ENCODE measurements at regions of chr7 and their contacts with region 1.

Region 1: GRCh38 chr7:149310113-149310836 is 48.3 kb downstream of the ZNF783 start:
- DNase-seq: no peak
- ATAC-seq: peak; percentile 80
- H3K4me3 Mint-ChIP-seq: no peak overlapping the region
- H3K27ac Mint-ChIP-seq: no peak overlapping the region
- H3K4me1 Mint-ChIP-seq: no peaks in the 10 kb centered on the region
- H3K27me3 Mint-ChIP-seq: peaks cover 3% of the 10 kb centered on the region
- CTCF ChIP-seq: peak; percentile 21; the same call in 1 of the 2 replicates

Region 2: GRCh38 chr7:149180722-149181449 is 129.4 kb before region 1 on chr7:
- CTCF ChIA-PET with region 1: no interaction called
- POLR2A ChIA-PET with region 1: no interaction called
- DNase-seq: no peak
- ATAC-seq: no peak
- H3K4me3 Mint-ChIP-seq: no peak overlapping the region
- H3K27ac Mint-ChIP-seq: peak overlapping the region; percentile 93
- H3K4me1 Mint-ChIP-seq: no peaks in the 10 kb centered on the region
- H3K27me3 Mint-ChIP-seq: no peaks in the 10 kb centered on the region
- CTCF ChIP-seq: no peak

Region 3: GRCh38 chr7:149195180-149196150 is 114.8 kb before region 1 on chr7 and contains the start of gene ZNF282:
- CTCF ChIA-PET with region 1: no interaction called
- POLR2A ChIA-PET with region 1: no interaction called
- DNase-seq: peak; percentile 95
- ATAC-seq: peak; percentile 96
- H3K4me3 Mint-ChIP-seq: peak within 1 kb of the TSS; percentile 88
- H3K27ac Mint-ChIP-seq: peak within 1 kb of the TSS; percentile 87
- H3K4me1 Mint-ChIP-seq: peaks cover 13% of the 10 kb centered on the region
- H3K27me3 Mint-ChIP-seq: no peaks in the 10 kb centered on the region
- CTCF ChIP-seq: no peak
- total RNA-seq, gene ZNF282: 34.8 to 39.3 TPM (median 38.5 TPM) in 3 replicates

Region 4: GRCh38 chr7:149229526-149229925 is 80.7 kb before region 1 on chr7:
- CTCF ChIA-PET with region 1: no interaction called
- POLR2A ChIA-PET with region 1: no interaction called
- DNase-seq: no peak
- ATAC-seq: peak; percentile 16; the same call in 1 of the 2 replicates
- H3K4me3 Mint-ChIP-seq: no peak overlapping the region
- H3K27ac Mint-ChIP-seq: no peak overlapping the region
- H3K4me1 Mint-ChIP-seq: no peaks in the 10 kb centered on the region
- H3K27me3 Mint-ChIP-seq: peaks cover 4% of the 10 kb centered on the region
- CTCF ChIP-seq: no peak

Region 5: DNA sequence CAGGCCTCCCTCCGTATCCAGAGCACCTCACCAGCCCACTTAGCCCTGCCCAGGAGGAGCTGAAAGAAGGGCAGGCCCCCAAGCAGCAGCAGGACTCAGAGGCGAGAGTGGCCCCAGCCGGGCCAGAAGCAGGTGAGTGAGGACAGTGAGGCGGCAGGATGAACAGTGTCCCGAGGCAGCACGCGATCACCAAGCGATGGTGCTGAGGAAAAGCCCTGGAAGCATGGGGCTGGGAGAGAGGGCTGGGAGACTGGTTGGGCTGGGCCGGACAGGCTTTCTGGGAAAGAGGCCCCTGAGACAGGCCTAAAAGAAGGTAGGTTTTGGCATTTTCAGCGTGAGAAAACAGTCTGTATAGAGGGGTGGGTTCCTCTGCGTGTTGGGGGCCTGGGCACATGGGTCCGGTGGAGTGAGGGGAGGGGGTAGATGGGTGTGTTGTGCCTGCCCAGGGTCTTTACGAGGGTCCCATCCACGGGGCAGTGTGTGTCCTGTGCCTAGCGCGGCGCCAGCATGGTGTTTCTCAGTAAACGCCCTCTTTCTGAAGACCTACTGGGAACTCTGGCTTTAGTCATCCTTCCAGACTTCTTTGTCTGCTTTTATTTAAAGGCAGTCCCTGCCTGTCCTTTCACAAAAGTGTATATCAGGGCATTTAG is 31.8 kb before region 1 on chr7:
- CTCF ChIA-PET with region 1: no interaction called
- POLR2A ChIA-PET with region 1: no interaction called
- DNase-seq: no peak
- ATAC-seq: no peak
- H3K4me3 Mint-ChIP-seq: no peak overlapping the region
- H3K27ac Mint-ChIP-seq: no peak overlapping the region
- H3K4me1 Mint-ChIP-seq: no peaks in the 10 kb centered on the region
- H3K27me3 Mint-ChIP-seq: 0 out of 2 replicates have a peak, but pooled peaks cover 1% of the 10 kb centered on the region
- CTCF ChIP-seq: no peak

Region 6: DNA sequence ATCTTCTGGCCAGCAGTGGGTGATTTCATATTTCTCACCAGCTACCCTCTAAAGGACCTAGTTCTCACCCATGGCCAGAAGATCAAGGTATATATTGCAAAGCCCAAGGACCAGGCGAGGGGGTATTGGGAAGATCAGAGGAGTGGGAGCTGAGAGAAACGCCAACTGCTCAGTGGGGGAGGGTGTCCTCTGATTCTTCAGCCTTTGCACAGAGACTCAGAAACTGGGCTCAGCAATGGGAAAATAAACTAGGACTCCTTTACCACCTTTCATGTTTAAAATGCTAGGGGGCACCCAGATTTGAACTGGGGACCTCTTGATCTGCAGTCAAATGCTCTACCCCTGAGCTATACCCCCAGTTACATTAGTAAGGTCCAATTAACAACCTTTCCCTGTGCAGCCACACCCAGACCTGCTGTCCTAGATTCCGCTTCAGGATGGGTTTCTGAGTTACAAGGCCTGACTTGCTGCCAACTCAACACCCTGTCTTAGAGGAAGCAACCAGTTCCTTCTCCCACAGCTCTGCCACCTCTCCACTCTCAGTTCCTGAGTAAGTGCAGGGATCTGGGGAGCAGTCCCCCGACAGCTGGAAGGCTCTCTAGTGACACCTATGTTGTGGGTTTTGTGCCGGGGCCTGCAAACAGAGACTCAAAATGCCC is 45.2 kb after region 1 on chr7:
- CTCF ChIA-PET with region 1: interaction called, 27 read pairs
- POLR2A ChIA-PET with region 1: no interaction called
- DNase-seq: peak; percentile 79
- ATAC-seq: peak; percentile 96
- H3K4me3 Mint-ChIP-seq: peak overlapping the region; percentile 72
- H3K27ac Mint-ChIP-seq: peak overlapping the region; percentile 91
- H3K4me1 Mint-ChIP-seq: peaks cover 15% of the 10 kb centered on the region
- H3K27me3 Mint-ChIP-seq: peaks cover 3% of the 10 kb centered on the region
- CTCF ChIP-seq: no peak

Region 7: DNA sequence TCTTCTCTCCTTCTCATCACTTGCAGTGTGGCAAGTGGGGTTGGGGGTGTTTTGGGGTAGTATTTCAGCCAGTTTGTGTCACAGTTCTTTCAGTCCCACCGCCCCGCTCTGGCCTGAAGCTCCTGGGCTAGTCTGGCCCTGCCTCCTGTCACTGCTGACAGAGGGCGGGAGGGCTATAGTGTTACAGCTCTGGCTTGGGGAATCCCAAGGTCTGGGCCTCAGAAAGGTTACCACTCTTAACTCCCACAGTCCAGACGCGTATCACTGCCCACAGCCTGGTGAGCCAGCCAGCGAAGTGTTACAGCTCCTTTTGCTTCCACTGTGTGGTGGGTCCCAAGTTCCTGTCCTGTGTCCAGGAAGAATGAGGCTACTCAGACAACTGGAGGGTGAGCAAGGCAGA is 94.5 kb after region 1 on chr7:
- CTCF ChIA-PET with region 1: interaction called, 46 read pairs
- POLR2A ChIA-PET with region 1: no interaction called
- DNase-seq: no peak
- ATAC-seq: no peak
- H3K4me3 Mint-ChIP-seq: no peak overlapping the region
- H3K27ac Mint-ChIP-seq: no peak overlapping the region
- H3K4me1 Mint-ChIP-seq: peaks cover 18% of the 10 kb centered on the region
- H3K27me3 Mint-ChIP-seq: 0 out of 2 replicates have a peak, but pooled peaks cover 3% of the 10 kb centered on the region
- CTCF ChIP-seq: no peak

Region 8: DNA sequence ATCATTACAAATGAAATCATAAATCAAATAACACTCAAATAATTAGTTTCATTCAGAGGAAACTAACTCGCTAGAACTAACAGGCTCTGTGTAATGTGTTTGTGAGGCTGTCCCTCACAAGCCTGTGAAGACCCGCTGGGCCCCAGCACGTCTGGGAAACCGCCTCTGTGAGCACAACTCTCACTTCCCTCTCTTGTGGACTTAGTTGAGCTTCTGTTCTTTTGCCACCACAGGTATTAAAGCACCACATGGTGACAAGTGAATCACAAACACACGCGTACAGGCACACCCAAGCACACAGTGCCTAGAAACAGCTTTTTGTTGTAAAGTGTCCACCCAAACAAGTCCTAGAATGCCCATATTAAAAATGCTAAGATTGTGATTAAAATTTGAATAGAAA is 99.6 kb after region 1 on chr7:
- CTCF ChIA-PET with region 1: interaction called, 46 read pairs
- POLR2A ChIA-PET with region 1: no interaction called
- DNase-seq: no peak
- ATAC-seq: no peak
- H3K4me3 Mint-ChIP-seq: no peak overlapping the region
- H3K27ac Mint-ChIP-seq: no peak overlapping the region
- H3K4me1 Mint-ChIP-seq: peaks cover 8% of the 10 kb centered on the region
- H3K27me3 Mint-ChIP-seq: peaks cover 15% of the 10 kb centered on the region
- CTCF ChIP-seq: no peak

Region 9: GRCh38 chr7:149460493-149461277 is 150.4 kb after region 1 on chr7 and contains the start of gene ZNF777:
- CTCF ChIA-PET with region 1: interaction called, 11 read pairs
- POLR2A ChIA-PET with region 1: no interaction called
- DNase-seq: peak; percentile 79
- ATAC-seq: peak; percentile 90
- H3K4me3 Mint-ChIP-seq: peak within 1 kb of the TSS; percentile 80
- H3K27ac Mint-ChIP-seq: peak within 1 kb of the TSS; percentile 65; the same call in 1 of the 2 replicates
- H3K4me1 Mint-ChIP-seq: peaks cover 17% of the 10 kb centered on the region
- H3K27me3 Mint-ChIP-seq: peaks cover 36% of the 10 kb centered on the region
- CTCF ChIP-seq: no peak
- total RNA-seq, gene ZNF777: 12.0 to 13.6 TPM (median 12.6 TPM) in 3 replicates